ENCODE measurements at regions of chr12 and their contacts with region 1.

Region 1: GRCh38 chr12:68158432-68158831 is 1.1 kb downstream of the IFNG start:
- DNase-seq: peak; percentile 26
- H3K4me3 Mint-ChIP-seq: peak overlapping the region; percentile 75
- H3K27ac Mint-ChIP-seq: peak overlapping the region; percentile 31
- H3K4me1 Mint-ChIP-seq: peaks cover 53% of the 10 kb centered on the region
- H3K27me3 Mint-ChIP-seq: no peaks in the 10 kb centered on the region

Region 2: DNA sequence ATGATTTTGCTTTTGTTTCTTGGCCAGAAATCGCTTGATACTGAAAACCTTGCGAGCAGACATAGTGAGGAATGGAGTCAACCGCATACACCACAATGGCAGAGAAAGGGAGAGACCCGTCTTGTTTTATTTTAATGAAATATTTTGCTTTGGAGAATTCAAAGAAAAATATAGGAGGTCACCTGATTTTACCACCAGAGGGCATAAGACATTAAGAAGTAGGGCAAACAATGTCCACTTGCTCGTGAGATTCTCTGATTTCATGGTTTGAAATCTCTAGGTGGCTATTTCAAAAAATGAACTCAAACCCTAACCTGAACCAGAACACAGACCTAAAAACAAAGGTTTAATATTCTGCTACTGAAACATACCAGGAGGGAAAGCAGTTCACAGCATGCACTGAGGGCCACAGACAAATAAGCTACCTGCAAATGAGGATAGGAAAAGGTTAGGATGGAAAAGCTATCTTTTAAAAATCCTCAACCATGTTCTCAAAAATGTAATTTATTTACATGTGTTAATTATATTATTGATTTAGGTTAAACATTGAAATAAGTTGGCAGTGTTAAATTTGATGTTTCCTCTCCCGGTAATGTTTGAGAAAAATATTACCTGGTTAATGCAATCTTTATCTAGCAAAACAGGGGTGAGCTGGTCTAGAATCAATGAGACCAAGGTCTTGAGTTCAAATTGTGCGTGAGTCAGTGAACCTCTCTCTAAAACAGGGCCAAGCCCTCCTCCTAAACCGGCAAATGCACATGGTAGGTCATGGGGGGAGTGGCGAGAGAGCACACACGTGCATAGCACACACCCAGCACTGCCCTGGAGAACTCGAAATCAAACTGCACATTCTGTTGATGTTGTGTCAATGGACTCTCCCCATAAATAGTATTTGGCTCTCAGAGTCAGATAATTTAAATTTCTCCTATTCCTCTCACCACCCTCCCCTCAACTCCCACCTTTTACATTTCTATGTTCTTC is 156.7 kb before region 1 on chr12:
- CTCF ChIA-PET with region 1: interaction called, 11 read pairs
- POLR2A ChIA-PET with region 1: no interaction called
- DNase-seq: no peak
- H3K4me3 Mint-ChIP-seq: no peak overlapping the region
- H3K27ac Mint-ChIP-seq: no peak overlapping the region
- H3K4me1 Mint-ChIP-seq: peaks cover 11% of the 10 kb centered on the region
- H3K27me3 Mint-ChIP-seq: no peaks in the 10 kb centered on the region

Region 3: DNA sequence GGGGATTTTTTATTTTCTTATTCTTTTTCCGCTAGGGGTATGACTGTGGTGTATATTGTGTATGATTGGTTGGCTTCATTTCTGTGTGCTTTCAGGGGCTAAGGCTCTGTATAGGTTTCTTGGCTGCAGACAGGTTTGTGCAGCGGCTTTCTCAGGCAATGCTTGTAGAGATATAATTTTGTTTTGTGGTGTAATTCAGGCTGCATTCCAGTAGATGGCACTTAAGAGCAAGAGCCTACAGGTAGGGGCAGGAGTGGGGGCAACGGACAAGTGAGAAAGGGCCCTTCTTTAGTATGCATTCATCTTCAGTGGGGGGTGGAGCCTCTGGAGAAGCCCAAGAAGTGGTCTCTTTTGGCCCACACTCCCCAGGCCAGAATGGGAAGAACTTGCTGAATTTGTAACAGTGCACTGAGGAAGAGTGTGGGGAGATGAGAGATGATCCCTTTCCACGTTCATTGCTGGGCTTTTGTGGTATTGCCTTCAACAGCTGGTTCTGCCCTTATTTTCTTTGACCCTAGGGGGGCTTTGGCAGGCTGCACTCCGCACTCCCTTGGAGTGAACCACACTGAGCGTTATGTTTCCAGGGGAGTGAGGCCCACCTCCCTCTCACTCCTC is 90.6 kb before region 1 on chr12:
- CTCF ChIA-PET with region 1: interaction called, 23 read pairs
- POLR2A ChIA-PET with region 1: no interaction called
- DNase-seq: no peak
- H3K4me3 Mint-ChIP-seq: no peak overlapping the region
- H3K27ac Mint-ChIP-seq: no peak overlapping the region
- H3K4me1 Mint-ChIP-seq: no peaks in the 10 kb centered on the region
- H3K27me3 Mint-ChIP-seq: peaks cover 9% of the 10 kb centered on the region

Region 4: GRCh38 chr12:68119724-68120211 is 38.7 kb before region 1 on chr12:
- CTCF ChIA-PET with region 1: interaction called, 126 read pairs
- POLR2A ChIA-PET with region 1: interaction called, 89 read pairs
- DNase-seq: peak; percentile 78
- H3K4me3 Mint-ChIP-seq: peak overlapping the region; percentile 28
- H3K27ac Mint-ChIP-seq: no peak overlapping the region
- H3K4me1 Mint-ChIP-seq: peaks cover 31% of the 10 kb centered on the region
- H3K27me3 Mint-ChIP-seq: no peaks in the 10 kb centered on the region

Region 5: DNA sequence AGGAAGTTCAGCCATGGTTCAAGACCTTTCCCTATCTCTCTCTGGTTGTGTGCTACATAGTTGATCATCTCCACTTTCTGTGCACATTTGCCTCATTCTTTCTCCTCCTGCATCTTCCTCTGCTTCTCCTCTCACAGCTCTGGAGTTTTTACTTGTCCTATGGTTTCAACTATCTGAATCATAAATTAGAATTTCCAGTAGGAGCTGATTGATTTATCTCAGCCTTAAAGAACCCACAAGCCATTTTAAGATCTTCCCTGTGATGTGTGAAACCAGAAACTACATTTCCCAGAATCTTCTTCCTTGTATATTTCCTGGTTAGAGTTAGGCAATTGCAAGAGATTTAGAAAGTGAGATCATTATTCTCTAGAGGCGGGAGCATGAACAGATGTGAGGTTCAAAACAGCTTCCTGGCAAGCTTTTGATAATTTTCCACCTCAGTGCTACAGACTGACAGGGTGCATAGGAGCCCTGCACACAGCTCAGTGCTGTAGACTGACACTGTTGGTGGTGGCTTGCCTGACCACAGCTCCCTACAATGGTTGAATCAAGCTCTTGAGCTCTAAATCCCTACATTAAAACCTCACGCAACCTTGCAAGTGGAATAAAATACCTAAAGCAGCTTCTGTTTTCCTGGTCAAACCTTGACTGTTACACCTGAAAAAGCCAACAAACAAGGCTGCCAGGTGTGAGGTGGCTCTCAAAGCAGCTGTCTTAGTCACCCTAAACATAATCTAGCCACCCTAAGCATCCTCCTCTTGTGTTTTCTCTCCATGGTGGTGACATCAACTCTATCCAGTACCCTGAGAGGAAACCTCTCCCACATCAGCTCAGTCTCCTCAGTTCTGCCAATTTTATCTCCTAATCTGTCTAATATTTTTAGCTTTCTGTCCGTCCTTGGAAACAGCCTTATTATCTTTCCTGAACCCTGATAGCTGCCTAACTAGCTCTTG is 22.6 kb after region 1 on chr12:
- CTCF ChIA-PET with region 1: interaction called, 16 read pairs
- POLR2A ChIA-PET with region 1: interaction called, 12 read pairs
- DNase-seq: peak; percentile 59
- H3K4me3 Mint-ChIP-seq: no peak overlapping the region
- H3K27ac Mint-ChIP-seq: peak overlapping the region; percentile 74
- H3K4me1 Mint-ChIP-seq: peaks cover 50% of the 10 kb centered on the region
- H3K27me3 Mint-ChIP-seq: peaks cover 9% of the 10 kb centered on the region

Region 6: DNA sequence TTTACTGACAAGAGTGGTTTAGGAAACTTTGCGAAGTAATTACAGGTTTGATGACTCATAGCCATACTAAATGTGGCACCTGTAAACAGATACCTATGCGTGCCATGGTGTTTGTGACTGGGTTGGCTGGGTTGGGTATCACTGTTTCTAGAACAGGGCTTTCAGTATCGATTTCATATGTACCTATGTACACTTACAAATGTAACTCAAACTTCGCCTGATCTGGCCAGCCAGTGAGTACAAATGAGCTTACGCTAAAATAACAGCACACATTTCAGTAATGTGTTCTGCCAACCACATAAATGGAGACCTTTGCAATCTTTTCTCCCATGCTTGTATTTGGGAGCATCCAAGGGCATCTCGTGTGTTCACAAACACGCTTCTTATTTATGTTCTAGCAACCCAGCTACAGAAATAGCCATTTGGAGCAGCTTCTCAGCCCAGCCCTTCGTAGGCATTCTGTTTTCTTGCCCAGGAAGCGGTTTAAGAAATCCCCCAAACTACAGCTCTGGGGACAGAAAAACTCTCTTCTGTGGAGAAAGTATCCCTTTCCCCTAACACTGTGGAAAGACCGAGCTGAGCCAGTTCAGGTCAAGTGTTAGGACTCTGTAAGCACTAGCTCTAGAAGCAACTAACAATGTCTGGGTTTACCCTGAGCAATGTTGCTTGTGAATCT is 216.0 kb after region 1 on chr12:
- CTCF ChIA-PET with region 1: no interaction called
- POLR2A ChIA-PET with region 1: no interaction called
- DNase-seq: peak; percentile 82
- H3K4me3 Mint-ChIP-seq: peak overlapping the region; percentile 46
- H3K27ac Mint-ChIP-seq: peak overlapping the region; percentile 96
- H3K4me1 Mint-ChIP-seq: peaks cover 61% of the 10 kb centered on the region
- H3K27me3 Mint-ChIP-seq: no peaks in the 10 kb centered on the region